ENCODE measurements at regions of chr6 and their contacts with region 1.

Region 1: GRCh38 chr6:41895300-41896233 is at the start of gene USP49:
- H3K4me3 Mint-ChIP-seq: no peak within 1 kb of the TSS
- H3K27ac Mint-ChIP-seq: no peak within 1 kb of the TSS
- H3K4me1 Mint-ChIP-seq: peaks cover 12% of the 10 kb centered on the region
- H3K27me3 Mint-ChIP-seq: no peaks in the 10 kb centered on the region

Region 2: GRCh38 chr6:41920921-41921711 is 25.5 kb after region 1 on chr6 and contains the starts of genes BYSL and MED20:
- intact Hi-C with region 1: loop called (anchors 1 kb)
- H3K4me3 Mint-ChIP-seq: peak within 1 kb of the TSS; percentile 99
- H3K27ac Mint-ChIP-seq: peak within 1 kb of the TSS; percentile 99
- H3K4me1 Mint-ChIP-seq: peaks cover 60% of the 10 kb centered on the region
- H3K27me3 Mint-ChIP-seq: no peaks in the 10 kb centered on the region

Measured in dendritic cell treated with granulocyte-macrophage colony-stimulating factor and Interleukin-4, amounts not matched to agents 40 ng/mL and 50 ng/mL, for 4 days (primary cell).